Activated CD4-positive, alpha-beta memory T cell treated with anti-CD3 and anti-CD28 coated beads, Interleukin-2, amount 10 ng/mL, durations not matched to agents 7 days and 5 days (primary cell): ENCODE measurements at regions of chr13 and their contacts with region 1.

Region 1: GRCh38 chr13:31044377-31045285 is 112.2 kb downstream of the TEX26 start:
- DNase-seq: peak; percentile 87
- H3K4me3 Mint-ChIP-seq: peak overlapping the region; percentile 38
- H3K27ac Mint-ChIP-seq: peak overlapping the region; percentile 86
- H3K4me1 Mint-ChIP-seq: peaks cover 37% of the 10 kb centered on the region
- H3K27me3 Mint-ChIP-seq: peaks cover 27% of the 10 kb centered on the region

Region 2: DNA sequence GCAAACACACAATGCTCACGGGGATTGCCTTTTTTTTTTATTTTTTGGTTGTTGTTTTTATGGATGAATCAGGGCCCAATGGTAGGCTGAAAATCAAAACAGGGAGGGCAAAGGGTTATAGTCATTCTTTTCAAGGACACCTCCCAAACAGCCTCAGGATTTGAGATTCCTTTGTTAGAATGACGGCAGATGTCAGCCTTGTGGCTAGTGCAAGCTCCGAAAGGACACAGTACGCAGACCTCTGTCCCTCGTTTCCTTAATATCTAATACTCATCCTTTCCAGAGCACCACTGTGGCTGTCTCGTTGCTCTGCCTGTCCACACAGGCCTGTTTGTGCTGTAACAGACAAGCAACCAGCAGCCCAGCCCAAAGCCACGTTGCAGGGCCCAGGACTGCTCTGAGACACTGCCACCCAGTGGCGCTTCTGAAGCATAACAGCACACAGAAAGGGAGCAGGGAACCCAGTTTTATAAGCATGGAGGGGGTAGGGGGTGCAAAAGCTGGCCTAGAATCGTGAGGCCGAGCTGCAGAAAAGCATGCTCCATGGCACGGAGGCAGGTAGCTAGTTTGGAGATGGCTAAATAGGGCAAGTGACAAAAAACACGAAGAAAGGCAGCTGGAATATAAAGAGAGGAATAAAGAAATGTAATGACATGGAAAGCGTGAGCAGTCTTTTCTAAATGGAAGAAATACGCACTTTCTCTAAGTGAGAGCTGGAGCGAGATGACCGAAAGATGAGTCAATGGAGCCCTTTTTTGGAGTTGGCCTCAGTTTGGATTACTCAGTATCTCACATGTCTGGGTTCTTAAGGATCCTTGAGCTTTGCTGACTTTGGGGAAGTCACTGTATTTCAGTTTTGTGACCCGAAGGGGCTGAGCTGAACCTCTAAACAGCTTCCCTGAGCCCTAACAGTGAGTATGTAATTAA is 179.2 kb before region 1 on chr13:
- CTCF ChIA-PET with region 1: interaction called, 10 read pairs
- POLR2A ChIA-PET with region 1: no interaction called
- DNase-seq: peak; percentile 71
- H3K4me3 Mint-ChIP-seq: no peak overlapping the region
- H3K27ac Mint-ChIP-seq: no peak overlapping the region
- H3K4me1 Mint-ChIP-seq: peaks cover 5% of the 10 kb centered on the region
- H3K27me3 Mint-ChIP-seq: peaks cover 20% of the 10 kb centered on the region

Region 3: GRCh38 chr13:30984620-30985019 is 60.0 kb before region 1 on chr13:
- CTCF ChIA-PET with region 1: interaction called, 43 read pairs
- POLR2A ChIA-PET with region 1: no interaction called
- DNase-seq: no peak
- H3K4me3 Mint-ChIP-seq: no peak overlapping the region
- H3K27ac Mint-ChIP-seq: no peak overlapping the region
- H3K4me1 Mint-ChIP-seq: peaks cover 4% of the 10 kb centered on the region
- H3K27me3 Mint-ChIP-seq: peaks cover 13% of the 10 kb centered on the region

Region 4: GRCh38 chr13:31056644-31057271 is 12.1 kb after region 1 on chr13:
- CTCF ChIA-PET with region 1: interaction called, 29 read pairs
- POLR2A ChIA-PET with region 1: interaction called, 9 read pairs
- DNase-seq: no peak
- H3K4me3 Mint-ChIP-seq: no peak overlapping the region
- H3K27ac Mint-ChIP-seq: peak overlapping the region; percentile 7
- H3K4me1 Mint-ChIP-seq: peaks cover 5% of the 10 kb centered on the region
- H3K27me3 Mint-ChIP-seq: peaks cover 7% of the 10 kb centered on the region

Region 5: GRCh38 chr13:31161828-31162590 is 117.4 kb after region 1 on chr13 and contains the start of gene HSPH1:
- CTCF ChIA-PET with region 1: interaction called, 9 read pairs
- POLR2A ChIA-PET with region 1: interaction called, 15 read pairs
- DNase-seq: peak; percentile 99
- H3K4me3 Mint-ChIP-seq: peak within 1 kb of the TSS; percentile 94
- H3K27ac Mint-ChIP-seq: peak within 1 kb of the TSS; percentile 96
- H3K4me1 Mint-ChIP-seq: peaks cover 44% of the 10 kb centered on the region
- H3K27me3 Mint-ChIP-seq: no peaks in the 10 kb centered on the region
- total RNA-seq, gene HSPH1: 95.4 to 103 TPM